ENCODE measurements at regions of chr5 and their contacts with region 1.

Region 1: DNA sequence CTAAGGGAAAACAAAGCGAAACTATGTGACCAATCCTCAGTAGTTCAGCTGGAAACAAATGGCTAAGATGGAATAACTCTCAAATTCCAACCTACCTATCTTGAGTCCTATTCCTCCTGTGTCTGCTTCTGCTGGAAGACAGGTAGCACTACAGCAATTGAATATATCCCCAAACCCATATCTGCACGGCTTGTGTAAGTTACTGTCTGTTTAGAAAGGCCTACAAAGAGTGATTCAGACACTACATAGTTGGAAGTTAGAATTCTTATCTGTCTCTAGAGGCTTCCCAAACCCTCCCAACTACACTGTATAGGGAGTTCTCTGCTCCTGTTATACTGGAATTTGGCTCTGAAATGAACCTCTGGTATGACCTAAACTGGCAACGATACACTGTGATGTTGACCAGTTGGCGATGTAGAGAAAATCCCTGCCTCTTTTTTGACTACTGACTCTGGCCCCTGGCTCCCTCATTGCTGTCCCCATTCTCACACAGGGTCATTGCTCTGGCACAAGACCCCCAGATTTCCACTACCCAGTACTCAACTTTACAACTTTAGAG is 22.6 kb upstream of the NADK2 start:
- DNase-seq: no peak
- ATAC-seq: no peak
- H3K4me3 Mint-ChIP-seq: no peak overlapping the region
- H3K27ac Mint-ChIP-seq: no peak overlapping the region
- H3K4me1 Mint-ChIP-seq: no peaks in the 10 kb centered on the region
- H3K27me3 Mint-ChIP-seq: peaks cover 21% of the 10 kb centered on the region

Region 2: GRCh38 chr5:35990941-35991611 is 273.2 kb before region 1 on chr5 and contains the start of gene UGT3A1:
- CTCF ChIA-PET with region 1: no interaction called
- DNase-seq: no peak
- ATAC-seq: no peak
- H3K4me3 Mint-ChIP-seq: no peak within 1 kb of the TSS
- H3K27ac Mint-ChIP-seq: no peak within 1 kb of the TSS
- H3K4me1 Mint-ChIP-seq: no peaks in the 10 kb centered on the region
- H3K27me3 Mint-ChIP-seq: peaks cover 34% of the 10 kb centered on the region
- total RNA-seq, gene UGT3A1: not detected

Region 3: GRCh38 chr5:36079200-36079761 is 185.0 kb before region 1 on chr5:
- CTCF ChIA-PET with region 1: interaction called, 13 read pairs
- DNase-seq: no peak
- ATAC-seq: peak; percentile 86
- H3K4me3 Mint-ChIP-seq: no peak overlapping the region
- H3K27ac Mint-ChIP-seq: no peak overlapping the region
- H3K4me1 Mint-ChIP-seq: no peaks in the 10 kb centered on the region
- H3K27me3 Mint-ChIP-seq: peaks cover 54% of the 10 kb centered on the region

Region 4: DNA sequence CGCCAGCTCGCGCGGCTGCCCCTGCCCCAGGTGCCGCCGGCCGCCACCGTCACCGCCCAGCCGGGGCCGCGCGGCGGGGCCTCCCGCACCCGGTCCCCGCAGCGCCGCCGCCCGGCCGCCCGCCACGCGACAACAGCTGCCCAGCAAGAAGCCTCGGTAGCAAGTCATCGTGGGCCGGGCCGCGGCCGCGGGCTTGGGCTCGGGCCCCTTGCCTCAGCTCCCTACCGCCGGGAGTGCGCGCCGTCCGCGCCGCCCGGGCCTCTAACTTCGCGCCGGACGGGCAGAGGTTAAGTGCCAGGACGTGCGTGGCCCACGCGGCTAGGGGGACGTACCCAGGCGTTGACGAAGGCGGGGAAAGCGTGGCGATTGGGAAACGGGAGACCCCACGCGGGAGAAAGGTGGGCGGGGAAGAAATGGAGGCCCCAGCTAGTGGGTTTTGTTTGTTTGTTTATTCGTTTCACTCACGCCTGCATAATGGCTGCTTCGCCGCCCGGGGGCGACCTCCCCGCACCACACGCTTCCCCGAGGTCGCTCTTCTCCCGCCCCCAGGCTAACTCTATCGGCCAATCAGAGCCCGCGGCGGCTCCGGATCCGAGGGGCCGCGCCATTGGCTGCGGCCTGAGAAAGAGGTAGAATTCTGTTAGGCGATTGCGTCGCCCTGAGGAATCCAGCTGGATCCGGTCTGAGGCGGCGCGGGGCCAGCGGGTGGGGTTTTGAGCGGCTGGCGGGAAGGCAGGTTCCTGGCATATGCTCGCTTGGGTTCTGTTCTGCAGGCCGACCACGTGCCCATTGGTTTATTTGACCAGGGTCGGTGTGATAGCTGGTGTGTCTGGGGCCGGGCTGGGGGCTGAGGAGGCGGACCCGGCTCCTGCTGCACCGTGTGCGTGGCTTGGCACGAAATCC is 22.4 kb before region 1 on chr5 and contains the start of gene NADK2:
- CTCF ChIA-PET with region 1: interaction called, 11 read pairs
- DNase-seq: peak; percentile 96
- ATAC-seq: peak; percentile 93
- H3K4me3 Mint-ChIP-seq: peak within 1 kb of the TSS; percentile 82
- H3K27ac Mint-ChIP-seq: peak within 1 kb of the TSS; percentile 90
- H3K4me1 Mint-ChIP-seq: peaks cover 40% of the 10 kb centered on the region
- H3K27me3 Mint-ChIP-seq: peaks cover 7% of the 10 kb centered on the region
- total RNA-seq, gene NADK2: 12.5 to 14.9 TPM

Region 5: GRCh38 chr5:36252722-36253365 is 11.4 kb before region 1 on chr5:
- CTCF ChIA-PET with region 1: interaction called, 11 read pairs
- DNase-seq: no peak
- ATAC-seq: no peak
- H3K4me3 Mint-ChIP-seq: no peak overlapping the region
- H3K27ac Mint-ChIP-seq: no peak overlapping the region
- H3K4me1 Mint-ChIP-seq: no peaks in the 10 kb centered on the region
- H3K27me3 Mint-ChIP-seq: peaks cover 38% of the 10 kb centered on the region

Region 6: GRCh38 chr5:36279054-36279698 is 14.9 kb after region 1 on chr5:
- CTCF ChIA-PET with region 1: interaction called, 20 read pairs
- DNase-seq: no peak
- ATAC-seq: no peak
- H3K4me3 Mint-ChIP-seq: no peak overlapping the region
- H3K27ac Mint-ChIP-seq: no peak overlapping the region
- H3K4me1 Mint-ChIP-seq: no peaks in the 10 kb centered on the region
- H3K27me3 Mint-ChIP-seq: peaks cover 25% of the 10 kb centered on the region

Region 7: GRCh38 chr5:36507332-36507952 is 243.2 kb after region 1 on chr5:
- CTCF ChIA-PET with region 1: interaction called, 12 read pairs
- DNase-seq: peak; percentile 75
- ATAC-seq: no peak
- H3K4me3 Mint-ChIP-seq: no peak overlapping the region
- H3K27ac Mint-ChIP-seq: no peak overlapping the region
- H3K4me1 Mint-ChIP-seq: no peaks in the 10 kb centered on the region
- H3K27me3 Mint-ChIP-seq: peaks cover 30% of the 10 kb centered on the region